ENCODE measurements at regions of chr9 and their contacts with region 1.

Region 1: GRCh38 chr9:12775679-12776512 is 1.1 kb downstream of the LURAP1L start:
- DNase-seq: peak; percentile 44 to 83 (median 64)
- H3K4me3 ChIP-seq: peak overlapping the region; percentile 51 to 95 (median 80)
- H3K27ac ChIP-seq: peak overlapping the region; percentile 74 to 99 (median 96)
- H3K27me3 ChIP-seq: no peaks in the 10 kb centered on the region
- CTCF ChIP-seq: peak in 52 of 56 donors; percentile 22 to 78 (median 54)

Region 2: GRCh38 chr9:12723409-12724028 is 52.4 kb before region 1 on chr9:
- intact Hi-C with region 1: loop called (anchors 2 to 5 kb)
- DNase-seq: no peak
- H3K4me3 ChIP-seq: no peak overlapping the region
- H3K27ac ChIP-seq: peak overlapping the region in 2 of 59 donors; percentile 43 to 46
- H3K27me3 ChIP-seq: no peaks in the 10 kb centered on the region
- CTCF ChIP-seq: peak; percentile 46 to 82 (median 68)

Region 3: GRCh38 chr9:12759761-12760160 is 16.1 kb before region 1 on chr9:
- intact Hi-C with region 1: loop called in 1 of 2 experiments (anchors 2 kb)
- DNase-seq: no peak
- H3K4me3 ChIP-seq: peak overlapping the region in 40 of 59 donors; percentile 4 to 67 (median 46)
- H3K27ac ChIP-seq: peak overlapping the region in 41 of 59 donors; percentile 12 to 90 (median 75)
- H3K27me3 ChIP-seq: no peaks in the 10 kb centered on the region
- CTCF ChIP-seq: no peak

Region 4: GRCh38 chr9:12819436-12820185 is 43.7 kb after region 1 on chr9:
- intact Hi-C with region 1: loop called (anchors 2 to 5 kb)
- DNase-seq: peak in 1 of 10 donors; percentile 29
- H3K4me3 ChIP-seq: no peak overlapping the region
- H3K27ac ChIP-seq: no peak overlapping the region
- H3K27me3 ChIP-seq: no peaks in the 10 kb centered on the region
- CTCF ChIP-seq: peak in 52 of 56 donors; percentile 15 to 61 (median 38)

Region 5: GRCh38 chr9:12884737-12885414 is 109.0 kb after region 1 on chr9:
- intact Hi-C with region 1: loop called in 1 of 2 experiments (anchors 5 kb)
- DNase-seq: peak in 1 of 10 donors; percentile 16
- H3K4me3 ChIP-seq: no peak overlapping the region
- H3K27ac ChIP-seq: no peak overlapping the region
- H3K27me3 ChIP-seq: no peaks in the 10 kb centered on the region
- CTCF ChIP-seq: peak in 55 of 56 donors; percentile 39 to 84 (median 62)

Measured in dorsolateral prefrontal cortex (tissue), 120 donors.